Posterior vena cava (tissue), 2 donors: ENCODE measurements at regions of chr6 and their contacts with region 1.

Region 1: GRCh38 chr6:3650959-3651697 is 100.4 kb downstream of the PXDC1 start:
- DNase-seq: no peak

Region 2: GRCh38 chr6:3640868-3641267 is 10.3 kb before region 1 on chr6:
- intact Hi-C with region 1: loop called in 1 of 2 experiments (anchors 1 kb)
- DNase-seq: no peak

Region 3: GRCh38 chr6:3697609-3698008 is 46.5 kb after region 1 on chr6:
- intact Hi-C with region 1: no loop called
- DNase-seq: no peak